Testis (tissue), 5 donors: ENCODE measurements at regions of chr2 and their contacts with region 1.

Region 1: DNA sequence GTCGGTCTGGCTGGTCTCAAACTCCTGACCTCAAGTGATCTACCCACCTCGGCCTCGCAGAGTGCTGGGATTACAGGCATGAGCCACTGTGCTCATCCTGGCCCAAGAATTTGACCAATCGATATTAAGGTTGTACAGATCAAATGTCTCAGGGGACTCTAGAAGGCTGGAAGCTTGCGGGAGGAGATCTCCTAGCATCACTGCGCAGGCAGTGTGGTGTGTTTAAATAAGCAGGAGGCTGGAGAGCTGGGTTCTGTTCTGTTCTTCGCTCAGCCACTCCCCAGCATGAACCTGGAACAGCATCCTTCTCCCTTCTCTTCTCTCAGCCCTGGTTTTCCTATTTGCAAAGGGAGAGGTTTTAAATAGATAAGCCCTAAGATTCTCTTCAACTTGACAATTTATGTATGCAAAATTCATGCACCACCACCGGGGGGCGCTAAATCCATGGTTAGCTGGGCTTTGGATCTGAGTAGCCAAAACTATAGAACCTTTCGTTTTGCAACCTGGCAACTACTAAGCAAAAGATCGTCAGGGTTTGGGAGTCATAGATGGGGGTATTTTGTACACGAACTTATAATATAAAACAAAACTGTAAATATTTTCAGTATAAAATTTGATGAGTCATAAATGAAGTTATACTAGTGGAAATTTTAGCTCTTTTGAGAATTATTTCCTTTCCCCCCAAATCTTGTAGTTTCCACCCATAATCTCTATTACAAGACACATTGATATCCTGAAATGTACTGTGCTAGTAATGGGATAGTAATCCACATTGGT is 60.6 kb downstream of the SLC16A14 start:
- DNase-seq: peak; percentile 89
- H3K4me3 ChIP-seq: no peak overlapping the region
- H3K27ac ChIP-seq: no peak overlapping the region
- H3K4me1 ChIP-seq: peaks cover 6% of the 10 kb centered on the region
- H3K27me3 ChIP-seq: no peaks in the 10 kb centered on the region
- CTCF ChIP-seq: peak; percentile 56 to 91 (median 91)
- POLR2A ChIP-seq: no peak

Region 2: GRCh38 chr2:229800997-229801754 is 206.9 kb before region 1 on chr2:
- intact Hi-C with region 1: no loop called
- DNase-seq: peak; percentile 66
- H3K4me3 ChIP-seq: no peak overlapping the region
- H3K27ac ChIP-seq: no peak overlapping the region
- H3K4me1 ChIP-seq: no peaks in the 10 kb centered on the region
- H3K27me3 ChIP-seq: no peaks in the 10 kb centered on the region
- CTCF ChIP-seq: peak; percentile 24 to 79 (median 53)
- POLR2A ChIP-seq: no peak

Region 3: DNA sequence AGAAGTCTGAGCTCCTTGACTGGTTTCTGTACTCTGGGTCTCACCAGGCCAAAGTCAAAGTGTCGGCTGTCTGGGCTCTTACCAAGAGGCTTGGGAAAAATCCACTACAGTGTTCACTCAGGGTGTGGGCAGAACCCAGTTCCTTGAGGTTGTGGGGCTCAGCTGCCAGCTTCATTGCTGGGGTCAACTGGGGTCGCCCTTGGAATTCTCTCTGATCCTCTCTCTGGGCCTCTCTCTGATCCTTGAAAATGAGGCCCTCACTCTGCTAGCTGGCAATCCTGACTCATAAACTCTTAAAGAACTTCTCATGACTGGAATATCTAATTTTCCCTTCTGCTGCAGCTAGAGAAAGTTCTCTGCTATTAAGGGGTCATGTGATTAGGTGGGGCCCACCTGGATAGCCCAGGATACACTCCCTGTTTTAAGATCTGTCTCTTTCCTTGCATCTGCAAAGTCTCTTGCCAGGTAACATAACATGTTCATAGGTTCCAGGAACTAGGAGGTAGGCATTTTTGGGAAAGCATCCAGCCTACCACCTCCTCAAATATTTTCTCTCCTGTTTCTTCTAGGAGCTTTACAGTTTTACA is 145.4 kb after region 1 on chr2:
- intact Hi-C with region 1: loop called (anchors 10 kb)
- DNase-seq: no peak
- H3K4me3 ChIP-seq: no peak overlapping the region
- H3K27ac ChIP-seq: no peak overlapping the region
- H3K4me1 ChIP-seq: no peaks in the 10 kb centered on the region
- H3K27me3 ChIP-seq: no peaks in the 10 kb centered on the region
- CTCF ChIP-seq: no peak
- POLR2A ChIP-seq: no peak

Region 4: GRCh38 chr2:230614913-230615332 is 606.8 kb after region 1 on chr2:
- intact Hi-C with region 1: loop called (anchors 5 kb)
- DNase-seq: no peak
- H3K4me3 ChIP-seq: no peak overlapping the region
- H3K27ac ChIP-seq: no peak overlapping the region
- H3K4me1 ChIP-seq: no peaks in the 10 kb centered on the region
- H3K27me3 ChIP-seq: no peaks in the 10 kb centered on the region
- CTCF ChIP-seq: no peak
- POLR2A ChIP-seq: no peak